ENCODE measurements at regions of chr3 and their contacts with region 1.

Region 1: DNA sequence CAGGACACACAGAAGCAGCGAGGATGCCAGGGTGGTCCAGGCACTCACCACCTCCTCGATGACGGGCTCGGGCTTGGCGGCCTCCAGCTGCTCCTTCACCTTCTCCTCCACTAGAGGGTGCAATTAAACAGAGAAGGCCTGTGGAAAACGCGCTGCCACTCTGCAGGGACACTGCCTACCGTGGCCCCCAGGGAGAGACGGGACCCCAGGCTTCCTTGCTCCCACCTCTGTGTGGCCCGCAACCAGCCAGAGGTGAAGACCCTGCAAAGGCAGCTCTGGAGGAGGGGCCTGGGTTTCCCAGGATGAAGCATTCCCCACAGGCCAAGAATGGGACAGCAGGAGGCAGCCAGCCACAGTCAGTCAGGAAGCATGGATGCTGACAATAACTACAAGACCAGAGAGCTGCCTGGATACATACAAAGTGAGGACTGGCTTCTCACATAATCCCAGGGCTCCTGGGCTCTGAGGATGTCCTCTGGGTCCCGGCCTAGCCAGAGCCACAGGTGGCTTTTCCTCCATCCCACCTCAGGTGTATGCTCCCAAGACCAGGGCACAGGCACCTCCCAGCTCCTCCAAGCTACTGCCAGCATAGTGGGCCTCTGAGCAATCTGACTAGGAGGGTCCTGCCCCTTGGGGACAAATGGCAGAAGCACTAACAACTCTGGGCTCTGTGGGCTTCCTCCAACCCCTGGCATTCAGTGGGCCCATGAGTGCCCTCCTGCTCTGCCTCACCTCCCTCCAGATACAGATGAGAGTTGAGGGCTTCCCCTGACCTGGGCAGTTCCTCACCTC is 46.2 kb downstream of the PTH1R start:
- DNase-seq: no peak
- H3K4me3 ChIP-seq: no peak overlapping the region
- H3K27ac ChIP-seq: no peak overlapping the region
- H3K4me1 ChIP-seq: peaks cover 23% of the 10 kb centered on the region
- H3K27me3 ChIP-seq: no peaks in the 10 kb centered on the region
- CTCF ChIP-seq: peak; percentile 56 to 74 (median 58)
- POLR2A ChIP-seq: no peak

Region 2: DNA sequence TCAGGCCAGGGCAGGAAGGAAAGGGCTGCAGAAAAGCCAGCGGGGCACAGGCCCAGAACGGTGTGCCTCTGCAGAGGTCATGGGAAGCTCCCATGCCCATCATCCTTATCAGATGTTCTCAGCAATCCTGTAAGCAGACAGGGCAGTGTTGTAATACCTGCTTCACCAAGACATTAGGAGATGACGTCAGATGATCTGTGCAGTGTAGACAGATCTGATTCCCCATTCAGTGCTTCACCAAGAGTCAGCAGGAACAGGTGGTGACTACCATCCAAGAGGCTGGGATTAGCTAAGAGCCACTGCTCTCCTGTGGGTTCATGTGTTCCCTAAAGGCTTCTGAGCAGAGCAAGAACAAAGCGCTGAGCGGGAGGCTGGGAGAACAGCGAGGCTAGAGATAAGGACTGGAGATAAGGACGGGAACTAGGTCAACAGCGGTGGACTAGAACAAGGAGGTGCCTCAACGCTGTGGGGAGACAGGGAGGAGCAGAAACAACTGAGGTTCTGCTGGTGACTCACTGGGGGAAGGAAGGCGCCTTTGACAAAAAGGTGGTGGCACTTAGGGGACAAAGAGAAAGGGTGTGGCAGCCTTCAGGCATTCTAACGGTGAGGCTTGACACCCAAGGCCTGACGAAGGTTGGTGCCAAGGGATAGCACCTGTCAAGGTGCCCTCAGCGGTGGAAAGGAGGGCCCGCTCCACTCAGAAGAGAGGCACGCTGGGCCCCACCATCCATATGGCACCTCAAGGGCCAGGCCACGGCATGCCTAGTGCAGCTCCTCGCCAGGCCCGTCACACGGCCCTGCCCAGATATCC is 24.4 kb after region 1 on chr3:
- intact Hi-C with region 1: no loop called
- DNase-seq: peak; percentile 90
- H3K4me3 ChIP-seq: no peak overlapping the region
- H3K27ac ChIP-seq: peak overlapping the region; percentile 64 to 71
- H3K4me1 ChIP-seq: peaks cover 77% of the 10 kb centered on the region
- H3K27me3 ChIP-seq: no peaks in the 10 kb centered on the region
- CTCF ChIP-seq: no peak
- POLR2A ChIP-seq: no peak

Region 3: DNA sequence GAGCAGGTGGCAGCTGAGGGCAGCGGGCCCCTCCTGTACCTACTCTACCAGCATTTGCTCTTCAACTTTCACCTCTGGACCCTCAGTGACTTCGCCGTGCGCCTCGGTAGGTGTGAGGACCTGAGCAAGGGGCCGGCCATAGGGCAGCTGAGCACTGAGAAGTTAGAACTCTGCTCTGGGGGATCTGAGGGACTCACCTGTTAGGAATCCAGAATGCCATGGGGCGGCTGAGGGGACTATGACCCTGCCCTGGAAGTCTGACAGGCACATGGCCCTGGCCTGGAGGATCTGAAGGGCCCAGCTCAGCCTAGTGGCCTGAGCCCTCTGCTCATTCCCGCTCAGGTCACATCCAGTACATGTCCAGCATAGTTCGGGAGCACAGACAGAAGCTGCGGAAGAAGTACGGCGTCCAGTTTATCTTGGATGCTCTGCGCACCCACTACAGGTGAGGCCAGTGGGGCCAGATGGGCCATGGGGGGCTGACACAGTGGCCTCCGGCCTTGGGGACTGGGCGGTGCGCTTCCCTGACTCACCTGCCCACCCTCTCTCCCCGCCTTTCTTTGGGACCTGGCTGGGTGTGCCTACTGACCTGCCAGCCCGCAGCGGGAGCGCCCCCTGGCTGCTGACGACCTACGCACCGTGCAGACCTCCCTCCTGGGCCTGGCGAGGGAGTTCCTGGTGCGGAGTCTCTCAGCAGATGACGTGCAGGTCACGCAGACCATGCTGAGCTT is 74.5 kb after region 1 on chr3:
- intact Hi-C with region 1: loop called (anchors 5 kb)
- DNase-seq: peak; percentile 85
- H3K4me3 ChIP-seq: no peak overlapping the region
- H3K27ac ChIP-seq: no peak overlapping the region
- H3K4me1 ChIP-seq: no peaks in the 10 kb centered on the region
- H3K27me3 ChIP-seq: no peaks in the 10 kb centered on the region
- CTCF ChIP-seq: peak; percentile 68 to 86 (median 73)
- POLR2A ChIP-seq: no peak

Region 4: GRCh38 chr3:47542471-47543173 is 618.9 kb after region 1 on chr3:
- intact Hi-C with region 1: no loop called
- DNase-seq: peak; percentile 36
- H3K4me3 ChIP-seq: no peak overlapping the region
- H3K27ac ChIP-seq: no peak overlapping the region
- H3K4me1 ChIP-seq: no peaks in the 10 kb centered on the region
- H3K27me3 ChIP-seq: no peaks in the 10 kb centered on the region
- CTCF ChIP-seq: no peak
- POLR2A ChIP-seq: no peak

Measured in testis (tissue), 5 donors.